ENCODE measurements at regions of chr1 and their contacts with region 1.

Region 1: DNA sequence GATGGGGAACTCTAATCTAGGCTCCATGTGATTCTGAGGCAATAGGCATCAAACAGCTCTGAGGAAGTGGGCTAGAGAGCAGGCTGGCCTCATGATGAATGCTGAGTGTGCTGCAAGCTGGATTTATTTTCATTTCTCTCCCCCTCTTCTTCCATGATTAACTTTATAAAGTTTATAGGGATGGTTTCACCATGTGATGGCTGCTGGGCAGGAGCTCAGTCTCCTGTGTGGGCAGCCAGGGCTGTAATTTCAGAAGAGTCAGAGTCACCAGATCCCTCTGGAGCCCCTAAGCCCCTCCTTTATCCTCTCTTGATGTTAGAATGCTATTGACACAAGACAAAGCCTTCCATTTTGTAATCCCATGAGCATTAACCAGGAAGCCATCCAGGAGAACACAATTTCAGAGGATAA is 143.6 kb downstream of the CNIH3 start:
- DNase-seq: no peak
- ATAC-seq: no peak
- H3K4me3 ChIP-seq: no peak overlapping the region
- H3K27ac ChIP-seq: no peak overlapping the region
- H3K4me1 ChIP-seq: no peaks in the 10 kb centered on the region
- H3K27me3 ChIP-seq: peaks cover 0 to 3% (median 0%) of the 10 kb centered on the region in 9 donors
- CTCF ChIP-seq: no peak
- POLR2A ChIP-seq: no peak

Region 2: DNA sequence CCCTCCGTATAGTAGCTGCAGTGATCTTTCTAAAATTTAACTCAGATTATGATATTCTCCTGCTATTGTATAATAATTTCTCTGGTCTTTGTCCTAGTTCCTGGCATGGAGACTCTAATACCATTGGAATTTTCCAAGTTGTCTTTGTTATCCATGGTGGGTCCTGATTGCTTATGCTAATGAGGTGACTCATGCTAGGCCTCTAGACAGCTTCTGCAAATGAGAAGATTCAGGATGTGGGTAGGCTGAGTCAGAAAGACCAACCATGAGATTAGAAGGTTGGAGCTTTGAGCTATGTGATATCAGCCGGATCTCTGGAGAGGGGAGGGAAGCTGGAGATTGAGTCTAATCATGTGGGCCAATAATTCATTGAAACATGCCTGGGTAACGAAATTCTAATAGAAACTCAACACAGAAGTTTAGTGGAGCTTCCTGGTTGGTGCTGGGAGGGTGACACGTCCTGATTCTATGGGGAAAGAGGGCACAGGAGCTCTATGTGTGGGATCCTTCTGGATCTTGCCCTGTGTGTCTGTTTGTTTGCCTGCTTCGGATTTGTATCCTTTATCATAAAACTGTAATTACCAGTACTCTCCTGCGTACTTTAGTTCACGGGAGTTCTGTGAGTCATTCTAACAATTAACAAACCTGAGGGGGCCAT is 216.8 kb before region 1 on chr1:
- intact Hi-C with region 1: no loop called
- DNase-seq: no peak
- ATAC-seq: peak in 2 of 4 donors; percentile 42 to 46
- H3K4me3 ChIP-seq: no peak overlapping the region
- H3K27ac ChIP-seq: no peak overlapping the region
- H3K4me1 ChIP-seq: peaks cover 0 to 35% (median 0%) of the 10 kb centered on the region in 12 donors
- H3K27me3 ChIP-seq: no peaks in the 10 kb centered on the region
- CTCF ChIP-seq: no peak
- POLR2A ChIP-seq: no peak

Region 3: DNA sequence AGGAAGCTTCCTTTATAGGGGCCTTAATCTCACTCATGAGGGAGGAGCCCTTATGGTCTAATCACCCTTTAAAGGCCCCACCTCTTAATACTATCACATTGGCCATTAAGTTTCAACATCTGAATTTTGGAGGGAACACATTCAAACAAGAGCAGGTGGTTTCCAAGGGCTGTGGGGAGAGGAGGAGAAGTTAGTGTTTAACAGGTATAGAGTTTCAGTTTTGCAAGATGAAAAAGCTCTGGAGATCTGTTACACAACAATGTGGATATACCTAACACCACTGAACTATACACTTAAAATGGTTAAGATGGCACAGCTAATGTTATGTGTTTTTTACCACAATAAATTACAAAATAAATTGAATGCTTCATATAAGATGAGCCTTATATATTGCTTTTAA is 56.4 kb after region 1 on chr1:
- intact Hi-C with region 1: loop called in 1 of 10 experiments (anchors 10 kb)
- DNase-seq: no peak
- ATAC-seq: no peak
- H3K4me3 ChIP-seq: no peak overlapping the region
- H3K27ac ChIP-seq: no peak overlapping the region
- H3K4me1 ChIP-seq: no peaks in the 10 kb centered on the region
- H3K27me3 ChIP-seq: peaks cover 0 to 4% (median 0%) of the 10 kb centered on the region in 9 donors
- CTCF ChIP-seq: no peak
- POLR2A ChIP-seq: no peak

Region 4: GRCh38 chr1:224828691-224829090 is 69.0 kb after region 1 on chr1:
- intact Hi-C with region 1: no loop called
- DNase-seq: no peak
- ATAC-seq: no peak
- H3K4me3 ChIP-seq: no peak overlapping the region
- H3K27ac ChIP-seq: no peak overlapping the region
- H3K4me1 ChIP-seq: no peaks in the 10 kb centered on the region
- H3K27me3 ChIP-seq: peaks cover 0 to 6% (median 0%) of the 10 kb centered on the region in 9 donors
- CTCF ChIP-seq: no peak
- POLR2A ChIP-seq: no peak

Measured in heart left ventricle (tissue), 16 donors.